ENCODE measurements at regions of chr6 and their contacts with region 1.

Region 1: GRCh38 chr6:116531675-116532570 is 13.6 kb downstream of the TRAPPC3L start:
- DNase-seq: no peak
- H3K4me3 ChIP-seq: no peak overlapping the region
- H3K27ac ChIP-seq: no peak overlapping the region
- H3K4me1 ChIP-seq: no peaks in the 10 kb centered on the region
- H3K27me3 ChIP-seq: peaks cover 0 to 7% (median 0%) of the 10 kb centered on the region in 4 donors
- CTCF ChIP-seq: peak; percentile 77 to 81 (median 81)
- EP300 ChIP-seq: no peak
- POLR2A ChIP-seq: no peak

Region 2: DNA sequence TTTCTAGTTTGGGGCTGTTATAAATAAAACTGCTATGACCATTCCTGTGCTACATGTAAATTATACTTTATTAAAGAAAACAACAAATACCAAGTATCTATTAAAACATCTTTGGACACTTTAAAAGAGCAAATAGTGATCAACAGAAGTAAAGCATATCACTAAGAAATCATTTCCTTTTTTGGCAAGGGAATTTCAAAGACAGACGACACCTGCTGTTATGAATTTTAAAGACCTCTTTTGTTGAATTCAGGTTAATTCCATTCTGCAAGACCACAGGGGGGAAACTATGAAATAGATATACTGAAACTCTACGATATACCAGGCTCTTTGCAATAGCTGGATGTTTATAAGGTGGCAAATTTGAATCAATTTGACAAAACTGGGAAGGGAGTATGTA is 259.7 kb before region 1 on chr6:
- intact Hi-C with region 1: loop called (anchors 5 kb)
- DNase-seq: no peak
- H3K4me3 ChIP-seq: no peak overlapping the region
- H3K27ac ChIP-seq: no peak overlapping the region
- H3K4me1 ChIP-seq: peaks cover 28 to 58% (median 37%) of the 10 kb centered on the region in 4 donors
- H3K27me3 ChIP-seq: no peaks in the 10 kb centered on the region
- CTCF ChIP-seq: no peak
- EP300 ChIP-seq: no peak
- POLR2A ChIP-seq: no peak

Region 3: GRCh38 chr6:116287689-116288282 is 244.1 kb before region 1 on chr6:
- intact Hi-C with region 1: loop called (anchors 1 kb)
- DNase-seq: no peak
- H3K4me3 ChIP-seq: no peak overlapping the region
- H3K27ac ChIP-seq: no peak overlapping the region
- H3K4me1 ChIP-seq: no peaks in the 10 kb centered on the region
- H3K27me3 ChIP-seq: no peaks in the 10 kb centered on the region
- CTCF ChIP-seq: peak; percentile 85 to 97 (median 88)
- EP300 ChIP-seq: no peak
- POLR2A ChIP-seq: no peak

Region 4: GRCh38 chr6:116409756-116410155 is 122.2 kb before region 1 on chr6:
- intact Hi-C with region 1: no loop called
- DNase-seq: no peak
- H3K4me3 ChIP-seq: no peak overlapping the region
- H3K27ac ChIP-seq: no peak overlapping the region
- H3K4me1 ChIP-seq: peaks cover 18 to 49% (median 41%) of the 10 kb centered on the region in 4 donors
- H3K27me3 ChIP-seq: no peaks in the 10 kb centered on the region
- CTCF ChIP-seq: no peak
- EP300 ChIP-seq: no peak
- POLR2A ChIP-seq: no peak

Region 5: DNA sequence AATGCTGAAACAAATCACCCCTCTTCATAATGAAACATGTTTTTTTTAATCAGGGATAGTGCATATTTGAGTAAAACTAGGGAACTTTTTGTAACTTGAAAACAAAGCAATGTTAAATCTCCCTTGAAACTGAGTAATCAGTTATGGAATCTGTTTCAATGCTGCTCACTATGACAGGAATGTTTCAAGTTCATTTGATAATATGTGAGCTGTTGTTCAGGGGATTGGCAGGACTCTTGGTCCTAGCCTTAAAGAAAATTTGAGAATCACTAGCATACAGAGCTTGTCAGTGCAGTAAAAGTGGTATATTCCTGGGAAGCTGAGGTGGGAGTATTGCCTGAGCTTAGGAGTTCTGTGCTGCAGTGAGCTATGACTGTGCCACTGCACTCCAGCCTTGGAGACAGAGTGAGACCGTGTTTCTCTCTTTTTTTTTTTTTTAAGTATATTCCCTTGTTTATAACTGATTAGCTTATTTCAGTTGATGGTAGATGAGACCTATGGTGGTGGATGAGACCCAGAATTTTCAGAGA is 92.3 kb before region 1 on chr6:
- intact Hi-C with region 1: no loop called
- DNase-seq: no peak
- H3K4me3 ChIP-seq: no peak overlapping the region
- H3K27ac ChIP-seq: no peak overlapping the region
- H3K4me1 ChIP-seq: no peaks in the 10 kb centered on the region
- H3K27me3 ChIP-seq: no peaks in the 10 kb centered on the region
- CTCF ChIP-seq: no peak
- EP300 ChIP-seq: no peak
- POLR2A ChIP-seq: no peak

Region 6: DNA sequence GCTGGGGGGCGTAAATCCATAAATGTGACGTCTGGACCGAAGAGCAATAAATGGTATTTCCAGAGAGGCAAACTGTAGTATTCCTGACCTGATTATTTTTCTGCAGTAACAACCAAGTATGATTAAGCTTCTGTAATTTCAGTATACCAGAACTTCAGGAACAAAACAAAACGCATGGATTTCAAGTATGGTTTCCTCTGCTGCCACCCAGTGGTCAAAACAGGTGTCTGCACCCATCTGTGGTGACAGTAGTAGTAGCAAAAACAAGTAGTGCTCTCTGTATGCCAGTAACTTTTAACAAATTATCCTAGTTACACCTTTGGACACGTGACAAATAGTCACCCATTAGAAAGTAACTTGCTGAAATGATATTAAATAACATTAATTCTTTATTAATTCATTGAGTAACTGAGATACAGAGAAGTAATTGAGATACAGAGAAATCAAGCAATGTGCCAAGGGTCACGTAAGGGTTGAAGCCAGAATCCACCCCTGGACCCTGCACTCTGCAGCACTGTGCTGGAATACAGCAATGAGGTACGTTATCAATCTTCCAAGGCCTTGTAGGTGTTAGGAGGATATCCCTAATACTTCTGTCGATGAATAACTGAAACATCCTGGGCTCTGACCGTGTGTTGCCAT is 29.6 kb after region 1 on chr6:
- intact Hi-C with region 1: loop called (anchors 2 kb)
- DNase-seq: no peak
- H3K4me3 ChIP-seq: peak overlapping the region in 2 of 4 donors; percentile 26 to 27
- H3K27ac ChIP-seq: no peak overlapping the region
- H3K4me1 ChIP-seq: peaks cover 3 to 29% (median 14%) of the 10 kb centered on the region in 4 donors
- H3K27me3 ChIP-seq: no peaks in the 10 kb centered on the region
- CTCF ChIP-seq: peak; percentile 89 to 97 (median 89)
- EP300 ChIP-seq: no peak
- POLR2A ChIP-seq: no peak